WTC11 (cell line): ENCODE measurements at regions of chr9 and their contacts with region 1.

Region 1: GRCh38 chr9:21395778-21396717 is 10.8 kb upstream of the IFNA2 start:
- DNase-seq: peak; percentile 84
- ATAC-seq: peak; percentile 84
- H3K4me3 Mint-ChIP-seq: peak overlapping the region; percentile 74
- H3K27ac Mint-ChIP-seq: no peak overlapping the region
- H3K4me1 Mint-ChIP-seq: peaks cover 2% of the 10 kb centered on the region; the same call in 1 of the 2 replicates
- H3K27me3 Mint-ChIP-seq: peaks cover 50% of the 10 kb centered on the region
- CTCF ChIP-seq: peak; percentile 77

Region 2: DNA sequence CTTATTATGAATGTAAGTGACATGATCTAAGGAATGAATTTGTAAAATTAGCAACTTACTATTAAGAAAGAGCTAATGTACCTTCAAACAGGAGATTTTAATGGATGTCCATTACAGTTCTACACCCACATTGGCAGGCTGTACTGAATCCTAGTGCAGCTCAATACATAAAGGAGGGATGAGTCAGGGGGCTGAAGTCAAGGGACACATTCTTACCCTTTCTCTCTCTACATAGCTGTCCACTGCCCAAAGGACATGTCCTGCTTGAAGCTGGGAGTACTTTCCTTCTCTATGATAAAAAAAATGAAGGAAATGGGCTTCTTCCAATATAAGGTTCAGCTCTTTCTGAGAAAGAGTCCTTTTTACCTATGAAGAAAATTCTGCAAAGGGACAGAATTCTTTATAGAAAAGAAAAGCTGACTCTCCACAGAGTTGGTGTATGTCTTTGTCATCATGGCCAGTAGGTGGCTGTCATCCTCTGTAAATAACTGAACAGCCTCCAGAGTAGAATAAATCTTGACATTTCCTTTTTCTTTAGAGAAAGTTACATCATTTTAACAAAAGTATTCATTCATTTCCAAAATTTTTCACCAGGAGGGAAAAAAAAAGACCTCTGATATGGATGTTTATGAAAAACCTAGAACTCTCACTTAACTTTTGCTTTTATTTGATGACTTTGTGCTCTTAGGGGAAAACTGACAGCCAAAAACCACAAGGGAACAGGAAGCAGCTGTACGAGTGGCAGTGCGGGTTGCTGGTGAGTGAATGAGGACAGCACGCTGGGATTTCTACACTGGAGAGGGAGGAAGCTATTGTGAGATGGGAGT is 143.1 kb before region 1 on chr9:
- CTCF ChIA-PET with region 1: interaction called, 13 read pairs
- POLR2A ChIA-PET with region 1: interaction called, 3 read pairs
- DNase-seq: peak; percentile 21
- ATAC-seq: peak; percentile 79
- H3K4me3 Mint-ChIP-seq: no peak overlapping the region
- H3K27ac Mint-ChIP-seq: no peak overlapping the region
- H3K4me1 Mint-ChIP-seq: peaks cover 17% of the 10 kb centered on the region
- H3K27me3 Mint-ChIP-seq: peaks cover 34% of the 10 kb centered on the region
- CTCF ChIP-seq: peak; percentile 35

Region 3: DNA sequence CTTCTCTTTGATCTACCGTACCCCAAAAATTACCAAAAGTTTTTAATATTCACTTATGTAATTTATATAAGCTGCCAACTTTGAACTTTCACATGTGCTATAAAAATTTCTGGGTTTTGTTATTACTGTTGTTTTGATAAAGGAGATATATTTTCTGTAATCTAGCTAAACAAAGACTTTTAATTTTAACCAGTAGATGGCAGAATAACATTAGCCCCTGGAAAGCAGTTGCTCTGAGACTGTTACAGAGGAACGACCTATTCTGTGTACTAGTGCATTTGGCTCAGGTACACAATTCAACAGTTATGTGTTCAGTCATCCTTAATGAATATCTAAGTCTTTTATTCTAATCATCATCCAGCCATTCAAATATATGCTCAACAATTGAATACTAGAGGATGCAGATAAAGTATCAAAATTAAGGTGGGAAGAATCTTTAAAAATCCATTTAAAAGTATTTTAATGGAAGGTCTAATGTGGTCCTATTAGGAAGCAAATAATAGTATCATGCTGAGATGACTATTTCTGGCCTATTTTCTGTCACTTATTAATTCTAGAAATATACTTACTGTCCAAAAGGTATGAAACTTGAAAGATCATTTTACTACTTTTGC is 69.4 kb before region 1 on chr9:
- CTCF ChIA-PET with region 1: interaction called, 48 read pairs
- POLR2A ChIA-PET with region 1: no interaction called
- DNase-seq: no peak
- ATAC-seq: peak; percentile 74
- H3K4me3 Mint-ChIP-seq: no peak overlapping the region
- H3K27ac Mint-ChIP-seq: no peak overlapping the region
- H3K4me1 Mint-ChIP-seq: 0 out of 2 replicates have a peak, but pooled peaks cover 2% of the 10 kb centered on the region
- H3K27me3 Mint-ChIP-seq: no peaks in the 10 kb centered on the region
- CTCF ChIP-seq: peak; percentile 14; the same call in 1 of the 2 replicates

Region 4: GRCh38 chr9:21381448-21382339 is 14.4 kb before region 1 on chr9:
- CTCF ChIA-PET with region 1: interaction called, 12 read pairs
- POLR2A ChIA-PET with region 1: no interaction called
- DNase-seq: peak; percentile 21
- ATAC-seq: peak; percentile 80
- H3K4me3 Mint-ChIP-seq: no peak overlapping the region
- H3K27ac Mint-ChIP-seq: no peak overlapping the region
- H3K4me1 Mint-ChIP-seq: peaks cover 15% of the 10 kb centered on the region
- H3K27me3 Mint-ChIP-seq: no peaks in the 10 kb centered on the region; the same call in 1 of the 2 replicates
- CTCF ChIP-seq: no peak

Region 5: DNA sequence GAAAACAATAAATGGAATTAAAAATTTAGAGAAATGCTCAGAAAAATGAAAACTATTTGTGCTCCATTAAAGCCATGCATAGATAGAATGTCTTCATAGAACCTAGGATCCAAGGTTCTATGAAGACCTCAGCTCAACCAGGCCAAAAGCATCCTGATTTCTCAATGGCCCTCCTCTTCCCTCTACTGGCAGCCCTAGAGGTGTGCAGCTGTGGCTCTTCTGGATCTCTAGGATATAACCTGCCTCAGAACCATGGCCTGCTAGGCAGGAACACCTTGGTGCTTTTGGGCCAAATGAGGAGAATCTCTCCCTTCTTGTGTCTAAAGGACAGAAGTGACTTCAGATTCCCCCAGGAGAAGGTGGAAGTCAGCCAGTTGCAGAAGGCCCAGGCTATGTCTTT is 59.3 kb after region 1 on chr9:
- CTCF ChIA-PET with region 1: interaction called, 10 read pairs
- POLR2A ChIA-PET with region 1: no interaction called
- DNase-seq: peak; percentile 25
- ATAC-seq: peak; percentile 97
- H3K4me3 Mint-ChIP-seq: no peak overlapping the region
- H3K27ac Mint-ChIP-seq: no peak overlapping the region
- H3K4me1 Mint-ChIP-seq: peaks cover 12% of the 10 kb centered on the region
- H3K27me3 Mint-ChIP-seq: peaks cover 5% of the 10 kb centered on the region
- CTCF ChIP-seq: 0 out of 2 replicates have a peak, but pooled peaks have one; percentile 31

Region 6: GRCh38 chr9:21761309-21761901 is 365.4 kb after region 1 on chr9:
- CTCF ChIA-PET with region 1: no interaction called
- POLR2A ChIA-PET with region 1: no interaction called
- DNase-seq: no peak
- ATAC-seq: no peak
- H3K4me3 Mint-ChIP-seq: no peak overlapping the region
- H3K27ac Mint-ChIP-seq: no peak overlapping the region
- H3K4me1 Mint-ChIP-seq: no peaks in the 10 kb centered on the region
- H3K27me3 Mint-ChIP-seq: peaks cover 95% of the 10 kb centered on the region
- CTCF ChIP-seq: no peak